ENCODE measurements at regions of chr2 and their contacts with region 1.

Region 1: GRCh38 chr2:73828818-73829570 is at the start of gene STAMBP:
- DNase-seq: peak; percentile 80
- ATAC-seq: peak; percentile 92
- H3K4me3 Mint-ChIP-seq: peak within 1 kb of the TSS; percentile 98
- H3K27ac Mint-ChIP-seq: peak within 1 kb of the TSS; percentile 96
- H3K4me1 Mint-ChIP-seq: peaks cover 41% of the 10 kb centered on the region
- H3K27me3 Mint-ChIP-seq: no peaks in the 10 kb centered on the region
- CTCF ChIP-seq: no peak
- total RNA-seq, gene STAMBP: 32.2 and 35.4 TPM in 2 replicates

Region 2: GRCh38 chr2:73736855-73737779 is 91.9 kb before region 1 on chr2 and contains the start of gene TPRKB:
- CTCF ChIA-PET with region 1: no interaction called
- POLR2A ChIA-PET with region 1: interaction called, 4 read pairs
- intact Hi-C with region 1: loop called (anchors 1 kb)
- DNase-seq: peak; percentile 85
- ATAC-seq: peak; percentile 98
- H3K4me3 Mint-ChIP-seq: peak within 1 kb of the TSS; percentile 94
- H3K27ac Mint-ChIP-seq: peak within 1 kb of the TSS; percentile 90
- H3K4me1 Mint-ChIP-seq: peaks cover 18% of the 10 kb centered on the region
- H3K27me3 Mint-ChIP-seq: no peaks in the 10 kb centered on the region
- CTCF ChIP-seq: no peak
- total RNA-seq, gene TPRKB: 26.9 and 27.1 TPM in 2 replicates

Region 3: GRCh38 chr2:73963385-73964120 is 134.6 kb after region 1 on chr2:
- CTCF ChIA-PET with region 1: no interaction called
- POLR2A ChIA-PET with region 1: no interaction called
- intact Hi-C with region 1: no loop called
- DNase-seq: no peak
- ATAC-seq: peak; percentile 18
- H3K4me3 Mint-ChIP-seq: no peak overlapping the region
- H3K27ac Mint-ChIP-seq: no peak overlapping the region
- H3K4me1 Mint-ChIP-seq: peaks cover 7% of the 10 kb centered on the region
- H3K27me3 Mint-ChIP-seq: no peaks in the 10 kb centered on the region
- CTCF ChIP-seq: no peak

Region 4: GRCh38 chr2:73985308-73986084 is 156.5 kb after region 1 on chr2:
- CTCF ChIA-PET with region 1: interaction called, 10 read pairs
- POLR2A ChIA-PET with region 1: interaction called, 4 read pairs
- intact Hi-C with region 1: no loop called
- DNase-seq: peak; percentile 81
- ATAC-seq: peak; percentile 72
- H3K4me3 Mint-ChIP-seq: peak overlapping the region; percentile 90
- H3K27ac Mint-ChIP-seq: peak overlapping the region; percentile 89
- H3K4me1 Mint-ChIP-seq: peaks cover 82% of the 10 kb centered on the region
- H3K27me3 Mint-ChIP-seq: no peaks in the 10 kb centered on the region
- CTCF ChIP-seq: no peak

Region 5: GRCh38 chr2:74092275-74092674 is 263.3 kb after region 1 on chr2:
- CTCF ChIA-PET with region 1: no interaction called
- POLR2A ChIA-PET with region 1: no interaction called
- intact Hi-C with region 1: no loop called
- DNase-seq: no peak
- ATAC-seq: no peak
- H3K4me3 Mint-ChIP-seq: no peak overlapping the region
- H3K27ac Mint-ChIP-seq: no peak overlapping the region
- H3K4me1 Mint-ChIP-seq: no peaks in the 10 kb centered on the region
- H3K27me3 Mint-ChIP-seq: no peaks in the 10 kb centered on the region
- CTCF ChIP-seq: no peak

Region 6: DNA sequence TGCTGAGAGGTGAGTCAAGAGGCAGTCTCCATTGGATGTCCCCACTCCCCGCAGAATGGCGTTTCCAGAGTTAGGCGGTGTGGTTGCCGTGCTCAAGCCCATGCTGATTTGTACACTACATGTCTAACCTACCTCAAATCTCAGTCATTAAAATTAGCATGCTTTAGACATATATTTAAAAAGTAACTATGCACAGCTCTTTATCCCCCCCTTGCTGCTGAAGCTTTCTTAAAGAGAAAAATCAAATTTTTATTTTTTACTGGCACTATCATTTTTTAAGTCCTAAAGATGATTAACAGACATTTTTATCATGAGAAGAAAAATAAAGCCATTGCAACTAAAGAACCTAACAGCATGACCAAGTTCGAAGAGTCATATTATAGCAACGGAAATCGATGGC is 275.8 kb after region 1 on chr2:
- CTCF ChIA-PET with region 1: interaction called, 6 read pairs
- POLR2A ChIA-PET with region 1: no interaction called
- intact Hi-C with region 1: loop called (anchors 1 kb)
- DNase-seq: no peak
- ATAC-seq: no peak
- H3K4me3 Mint-ChIP-seq: no peak overlapping the region
- H3K27ac Mint-ChIP-seq: no peak overlapping the region
- H3K4me1 Mint-ChIP-seq: no peaks in the 10 kb centered on the region
- H3K27me3 Mint-ChIP-seq: no peaks in the 10 kb centered on the region
- CTCF ChIP-seq: no peak

Region 7: DNA sequence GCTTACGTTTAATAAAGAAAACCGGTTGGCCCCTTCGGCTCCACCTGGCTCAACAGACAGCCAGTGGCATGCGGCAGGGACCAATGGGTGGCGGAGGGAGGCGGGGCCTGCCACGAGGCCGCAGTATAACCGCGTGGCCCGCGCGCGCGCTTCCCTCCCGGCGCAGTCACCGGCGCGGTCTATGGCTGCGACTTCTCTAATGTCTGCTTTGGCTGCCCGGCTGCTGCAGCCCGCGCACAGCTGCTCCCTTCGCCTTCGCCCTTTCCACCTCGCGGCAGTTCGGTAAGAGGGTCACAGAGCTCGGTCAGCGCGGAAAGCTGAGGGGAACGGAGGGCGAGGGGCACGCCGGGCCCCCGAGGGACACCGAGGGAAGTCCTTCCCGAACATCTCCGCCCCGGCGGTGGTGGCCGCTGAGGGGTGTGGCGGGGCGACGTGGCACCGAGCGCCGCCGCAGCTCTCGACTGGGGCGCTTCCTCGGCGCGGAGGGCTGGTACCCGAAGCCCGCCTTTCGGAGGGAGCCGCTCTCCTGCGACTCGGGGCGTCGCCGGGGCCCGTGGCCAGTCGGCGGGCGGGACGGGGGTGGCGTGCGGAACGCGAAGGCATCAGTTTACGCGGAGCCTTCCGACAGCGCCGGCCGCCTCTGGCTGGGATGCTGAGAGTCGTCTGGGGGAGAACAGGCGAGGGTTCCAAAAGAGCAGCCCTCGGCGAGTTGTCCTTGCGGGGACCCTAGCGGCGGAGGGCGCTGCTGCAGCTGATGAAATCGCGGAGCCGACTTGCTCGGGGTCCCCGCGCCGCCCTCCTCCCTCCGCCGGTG is 369.7 kb after region 1 on chr2 and contains the start of gene MTHFD2:
- CTCF ChIA-PET with region 1: interaction called, 4 read pairs
- POLR2A ChIA-PET with region 1: interaction called, 15 read pairs
- intact Hi-C with region 1: no loop called
- DNase-seq: peak; percentile 87
- ATAC-seq: peak; percentile 87
- H3K4me3 Mint-ChIP-seq: peak within 1 kb of the TSS; percentile 99
- H3K27ac Mint-ChIP-seq: peak within 1 kb of the TSS; percentile 100
- H3K4me1 Mint-ChIP-seq: peaks cover 34% of the 10 kb centered on the region
- H3K27me3 Mint-ChIP-seq: no peaks in the 10 kb centered on the region
- CTCF ChIP-seq: peak; percentile 50
- total RNA-seq, gene MTHFD2: 135 and 150 TPM in 2 replicates

Region 8: DNA sequence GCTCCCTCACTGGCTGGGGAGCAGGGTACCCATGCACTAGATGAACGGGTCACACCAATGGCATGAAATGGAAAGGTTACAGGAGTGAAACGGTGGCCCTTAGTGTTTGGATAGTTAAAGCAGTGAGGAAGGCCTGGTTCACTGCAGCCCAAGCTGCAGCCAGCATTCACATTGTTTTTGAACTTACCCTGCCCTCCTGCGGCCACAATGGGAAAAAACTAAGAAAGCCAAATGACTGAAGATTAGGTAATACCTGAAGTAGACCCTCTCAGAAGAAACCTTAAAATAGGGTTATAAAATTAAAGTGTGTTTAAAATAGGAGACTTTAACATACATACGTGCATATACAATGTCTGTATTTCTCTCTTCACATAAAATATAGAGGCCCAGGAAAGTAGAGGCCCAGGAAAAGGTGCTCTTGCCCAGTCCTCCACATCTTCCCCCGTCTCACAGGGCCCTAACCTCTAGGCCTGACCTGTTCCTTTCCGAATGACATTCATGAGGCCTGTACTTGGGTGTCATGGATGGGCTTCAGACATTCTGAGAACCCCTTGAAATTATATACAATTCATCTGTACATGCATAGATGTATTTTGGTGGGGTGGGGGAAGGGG is 758.8 kb after region 1 on chr2:
- CTCF ChIA-PET with region 1: interaction called, 10 read pairs
- POLR2A ChIA-PET with region 1: no interaction called
- intact Hi-C with region 1: no loop called
- DNase-seq: peak; percentile 43
- ATAC-seq: peak; percentile 96
- H3K4me3 Mint-ChIP-seq: no peak overlapping the region
- H3K27ac Mint-ChIP-seq: no peak overlapping the region
- H3K4me1 Mint-ChIP-seq: peaks cover 8% of the 10 kb centered on the region
- H3K27me3 Mint-ChIP-seq: peaks cover 4% of the 10 kb centered on the region
- CTCF ChIP-seq: no peak